A549 (cell line): ENCODE measurements at regions of chr12 and their contacts with region 1.

Region 1: DNA sequence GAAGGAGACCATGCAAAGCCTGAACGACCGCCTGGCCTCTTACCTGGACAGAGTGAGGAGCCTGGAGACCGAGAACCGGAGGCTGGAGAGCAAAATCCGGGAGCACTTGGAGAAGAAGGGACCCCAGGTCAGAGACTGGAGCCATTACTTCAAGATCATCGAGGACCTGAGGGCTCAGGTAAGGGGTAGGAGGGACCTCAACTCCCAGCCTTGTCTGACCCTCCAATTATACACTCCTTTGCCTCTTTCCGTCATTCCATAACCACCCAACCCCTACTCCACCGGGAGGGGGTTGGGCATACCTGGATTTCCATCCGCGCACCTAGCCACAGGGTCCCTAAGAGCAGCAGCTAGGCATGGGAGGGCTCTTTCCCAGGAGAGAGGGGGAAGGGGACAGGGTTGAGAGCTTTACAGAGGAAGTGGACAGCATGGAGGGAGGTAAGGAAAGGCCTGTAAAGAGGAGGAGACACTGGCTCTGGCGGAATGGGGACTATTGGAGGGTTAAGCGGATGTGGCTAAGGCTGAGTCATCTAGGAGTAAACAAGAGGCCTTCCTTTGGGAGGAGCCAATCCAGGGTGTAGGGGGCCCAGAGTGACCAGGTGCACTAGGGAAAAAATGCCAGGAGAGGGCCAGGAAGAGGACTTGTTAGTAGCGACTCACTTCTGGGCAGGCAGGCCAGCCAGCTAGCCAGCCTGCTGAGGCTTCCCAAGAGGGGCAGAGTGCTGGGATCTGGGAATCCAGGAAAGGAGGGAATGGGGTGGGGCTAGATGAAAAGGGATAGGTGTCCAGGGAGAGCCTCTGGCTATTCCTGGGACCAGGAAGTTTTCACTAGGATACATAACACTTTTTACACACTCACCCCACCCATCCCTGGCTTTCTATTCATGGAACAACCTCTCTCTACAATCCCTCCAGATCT is 754 bp downstream of the KRT18 start:
- DNase-seq: peak; percentile 87 to 95
- ATAC-seq: peak; percentile 75 to 82
- H3K4me3 ChIP-seq: peak overlapping the region; percentile 91
- H3K27ac ChIP-seq: peak overlapping the region; percentile 96 to 97
- H3K4me1 ChIP-seq: peaks cover 66% of the 10 kb centered on the region
- CTCF ChIP-seq: no peak
- EP300 ChIP-seq: 0 out of 5 replicates have a peak, but pooled peaks of 1 of the 2 experiments have one; percentile 16
- POLR2A ChIP-seq: peak; percentile 49
- RAD21 ChIP-seq: no peak

Region 2: GRCh38 chr12:52473768-52474167 is 475.9 kb before region 1 on chr12 and contains the start of gene KRT6C:
- CTCF ChIA-PET with region 1: no interaction called
- POLR2A ChIA-PET with region 1: no interaction called
- DNase-seq: no peak
- ATAC-seq: no peak
- H3K4me3 ChIP-seq: no peak within 1 kb of the TSS
- H3K27ac ChIP-seq: no peak within 1 kb of the TSS
- H3K4me1 ChIP-seq: no peaks in the 10 kb centered on the region
- CTCF ChIP-seq: no peak
- EP300 ChIP-seq: no peak
- POLR2A ChIP-seq: no peak
- RAD21 ChIP-seq: no peak
- polyA plus RNA-seq, gene KRT6C: not detected in 2 replicates

Region 3: DNA sequence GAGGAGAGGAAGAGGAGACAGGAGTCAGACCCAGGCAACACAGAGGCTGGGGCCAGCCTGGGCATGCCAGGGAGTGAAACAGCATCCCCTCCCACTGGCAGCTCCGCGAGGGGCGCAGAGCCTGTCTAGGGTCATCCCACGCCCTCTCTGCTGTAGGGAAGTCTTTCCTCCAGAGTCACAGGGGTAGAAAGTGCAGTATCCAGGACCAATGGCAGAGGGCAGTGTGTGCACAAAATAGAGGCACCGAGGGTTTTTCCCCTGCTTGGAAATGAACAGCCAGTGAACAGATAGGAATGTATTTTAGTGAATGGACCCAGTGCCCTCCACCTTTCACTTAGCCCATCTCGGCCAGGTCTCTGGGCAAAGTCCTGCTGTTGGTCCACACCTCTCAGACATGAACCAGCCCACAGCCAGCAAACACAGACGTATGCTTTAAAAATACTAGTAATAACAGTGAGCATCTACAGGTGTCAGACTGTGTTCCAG is 366.7 kb before region 1 on chr12:
- CTCF ChIA-PET with region 1: no interaction called
- POLR2A ChIA-PET with region 1: no interaction called
- DNase-seq: peak; percentile 74 to 88
- ATAC-seq: peak; percentile 87 to 96
- H3K4me3 ChIP-seq: no peak overlapping the region
- H3K27ac ChIP-seq: peak overlapping the region; percentile 43 to 82
- H3K4me1 ChIP-seq: peaks cover 24% of the 10 kb centered on the region
- CTCF ChIP-seq: peak; percentile 85
- EP300 ChIP-seq: no peak
- POLR2A ChIP-seq: no peak
- RAD21 ChIP-seq: peak; percentile 94 to 97

Region 4: GRCh38 chr12:52691076-52691840 is 258.4 kb before region 1 on chr12:
- CTCF ChIA-PET with region 1: no interaction called
- POLR2A ChIA-PET with region 1: no interaction called
- DNase-seq: no peak
- ATAC-seq: no peak
- H3K4me3 ChIP-seq: no peak overlapping the region
- H3K27ac ChIP-seq: no peak overlapping the region
- H3K4me1 ChIP-seq: no peaks in the 10 kb centered on the region
- CTCF ChIP-seq: no peak
- EP300 ChIP-seq: no peak
- POLR2A ChIP-seq: no peak
- RAD21 ChIP-seq: no peak

Region 5: DNA sequence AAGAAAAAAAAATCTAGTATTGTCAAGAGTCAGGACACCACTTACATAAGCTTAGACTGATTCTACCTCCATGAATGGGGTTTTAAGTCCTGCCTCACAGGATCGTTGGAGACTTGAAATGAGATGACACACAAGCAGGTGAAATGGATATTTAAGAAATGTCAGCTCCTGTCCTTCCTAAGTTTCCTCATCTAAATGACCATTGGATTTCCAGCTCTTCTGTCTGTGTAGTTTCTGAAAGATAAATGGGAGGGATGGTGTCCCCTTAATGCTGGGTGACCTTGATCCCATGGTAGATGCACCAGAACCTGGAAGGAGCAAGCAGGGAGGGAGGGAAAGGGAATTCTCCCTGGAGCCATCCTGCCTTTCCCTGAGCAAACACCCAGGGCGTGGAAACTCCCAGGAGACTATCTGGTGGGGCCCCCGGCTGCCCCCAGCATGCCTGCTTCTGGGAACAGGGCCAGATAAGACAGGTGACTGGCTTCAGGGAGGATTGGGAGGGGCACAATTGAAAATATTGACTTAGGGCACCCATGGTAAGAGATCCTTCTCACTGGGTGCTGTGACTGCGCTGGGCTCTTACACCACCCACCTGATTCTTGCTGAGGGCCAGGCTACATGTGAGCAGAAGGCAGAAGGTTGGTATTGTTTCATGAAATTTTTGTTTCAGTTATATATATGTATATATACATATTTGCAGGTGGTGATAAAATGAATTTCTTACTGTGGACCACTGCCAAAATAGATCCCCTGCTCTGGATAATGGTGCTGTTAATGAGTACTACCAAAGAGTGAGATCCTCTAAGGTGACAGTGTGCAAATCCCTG is 54.4 kb before region 1 on chr12:
- CTCF ChIA-PET with region 1: interaction called, 1,736 read pairs
- POLR2A ChIA-PET with region 1: interaction called, 24 read pairs
- DNase-seq: peak; percentile 85 to 98
- ATAC-seq: peak; percentile 66 to 71
- H3K4me3 ChIP-seq: 0 out of 3 replicates have a peak overlapping the region, but pooled peaks have one; percentile 7
- H3K27ac ChIP-seq: peak overlapping the region; percentile 78 to 91
- H3K4me1 ChIP-seq: peaks cover 59% of the 10 kb centered on the region
- CTCF ChIP-seq: no peak
- EP300 ChIP-seq: peak; percentile 76 to 84; a peak in 2 of 5 replicates
- POLR2A ChIP-seq: no peak
- RAD21 ChIP-seq: 0 out of 5 replicates have a peak, but pooled peaks of 1 of the 2 experiments have one; percentile 27

Region 6: DNA sequence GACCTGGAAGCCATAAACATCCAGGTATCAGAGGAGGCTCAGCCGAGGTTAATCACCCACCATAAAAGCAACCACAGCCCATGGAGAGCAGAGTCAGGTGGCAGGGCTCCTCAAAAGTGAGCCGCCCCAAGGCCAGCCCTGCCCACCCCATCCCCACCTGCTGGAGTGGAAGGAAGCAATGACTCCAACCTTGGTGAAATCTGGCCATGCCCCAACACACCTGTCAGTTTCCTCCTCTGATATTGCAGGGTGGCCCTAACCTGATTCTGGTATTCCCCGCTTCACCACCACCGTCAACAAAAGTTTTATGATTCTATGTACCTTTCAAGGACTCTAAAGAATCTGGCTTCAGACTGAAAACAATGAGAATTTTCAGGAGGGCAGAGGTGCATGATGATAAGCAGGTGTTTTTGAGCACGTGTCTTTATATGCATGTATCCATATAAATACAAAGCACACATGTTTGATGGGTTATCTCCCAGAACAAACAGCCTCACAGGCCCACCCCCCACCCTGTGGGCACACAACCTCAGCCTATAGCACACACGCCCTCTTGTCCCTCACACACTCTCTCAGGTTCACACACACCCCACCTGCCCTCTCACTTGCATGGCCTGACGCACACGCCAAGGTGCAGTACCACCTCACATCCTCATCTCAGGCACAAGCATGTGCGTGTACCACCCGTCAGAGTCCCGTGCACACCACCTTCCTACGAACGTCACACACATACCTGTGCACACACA is 36.4 kb before region 1 on chr12:
- CTCF ChIA-PET with region 1: interaction called, 20 read pairs
- POLR2A ChIA-PET with region 1: interaction called, 6 read pairs
- DNase-seq: no peak
- ATAC-seq: no peak
- H3K4me3 ChIP-seq: no peak overlapping the region
- H3K27ac ChIP-seq: peak overlapping the region in 1 of 2 experiments; percentile 68; a peak in 3 of 6 replicates
- H3K4me1 ChIP-seq: peaks cover 14% of the 10 kb centered on the region
- CTCF ChIP-seq: no peak
- EP300 ChIP-seq: no peak
- POLR2A ChIP-seq: no peak
- RAD21 ChIP-seq: no peak

Region 7: GRCh38 chr12:52964556-52965332 is 15.1 kb after region 1 on chr12:
- CTCF ChIA-PET with region 1: interaction called, 37 read pairs
- POLR2A ChIA-PET with region 1: interaction called, 50 read pairs
- DNase-seq: peak in 1 of 2 experiments; percentile 39
- ATAC-seq: peak in 1 of 2 experiments; percentile 28; a peak in 3 of 6 replicates
- H3K4me3 ChIP-seq: no peak overlapping the region
- H3K27ac ChIP-seq: peak overlapping the region; percentile 67 to 83
- H3K4me1 ChIP-seq: peaks cover 34% of the 10 kb centered on the region
- CTCF ChIP-seq: no peak
- EP300 ChIP-seq: no peak
- POLR2A ChIP-seq: no peak
- RAD21 ChIP-seq: no peak

Region 8: GRCh38 chr12:52969828-52970569 is 20.3 kb after region 1 on chr12:
- CTCF ChIA-PET with region 1: interaction called, 37 read pairs
- POLR2A ChIA-PET with region 1: interaction called, 50 read pairs
- DNase-seq: peak in 1 of 2 experiments; percentile 96
- ATAC-seq: peak; percentile 39 to 67
- H3K4me3 ChIP-seq: 0 out of 3 replicates have a peak overlapping the region, but pooled peaks have one; percentile 3
- H3K27ac ChIP-seq: peak overlapping the region; percentile 90 to 91
- H3K4me1 ChIP-seq: peaks cover 72% of the 10 kb centered on the region
- CTCF ChIP-seq: no peak
- EP300 ChIP-seq: peak; percentile 72 to 91; a peak in 4 of 5 replicates
- POLR2A ChIP-seq: no peak
- RAD21 ChIP-seq: 0 out of 5 replicates have a peak, but pooled peaks of 1 of the 2 experiments have one; percentile 1